GM12878 (cell line): ENCODE measurements at regions of chr2 and their contacts with region 1.

Region 1: DNA sequence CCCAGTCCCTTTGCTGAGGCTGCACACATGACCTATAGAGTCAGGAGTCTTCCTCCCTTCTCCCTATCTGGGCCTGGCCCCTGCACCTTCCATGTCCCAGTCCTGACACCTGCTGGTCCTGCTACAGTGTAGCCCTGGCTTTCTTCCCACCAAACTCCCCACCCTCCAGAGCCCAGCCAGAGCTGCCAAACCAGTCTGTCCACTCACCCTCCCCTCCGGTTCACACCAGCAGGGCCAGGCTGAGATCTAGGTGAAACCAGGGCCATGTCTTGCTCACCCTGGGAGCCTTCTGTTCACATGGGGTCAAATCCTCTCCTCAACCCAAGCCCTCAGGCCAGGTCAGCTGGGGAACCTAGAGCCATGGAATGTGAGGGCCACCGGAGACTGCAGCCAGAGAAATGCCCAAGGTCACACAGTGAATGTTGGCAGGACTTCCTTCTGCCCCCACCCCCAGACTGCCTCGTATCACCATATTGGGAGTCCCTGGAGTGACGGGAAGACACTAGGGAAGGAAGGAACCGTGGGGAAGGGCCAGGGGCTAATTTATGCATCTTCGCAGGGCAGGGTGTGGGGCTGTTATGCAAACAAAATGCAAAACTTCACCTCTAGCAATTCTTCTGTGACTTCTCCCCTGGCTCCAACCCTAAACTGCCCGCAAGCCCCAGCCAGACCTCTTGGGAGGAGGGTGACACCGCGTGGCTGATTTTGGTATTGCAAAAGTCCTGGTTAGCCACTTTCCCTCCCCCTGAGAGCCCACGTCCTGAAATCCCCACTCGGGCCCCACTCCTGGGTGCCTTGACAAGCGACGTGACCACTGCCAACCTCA is 14.6 kb downstream of the TNS1 start:
- DNase-seq: no peak
- ATAC-seq: peak; percentile 94
- H3K4me3 ChIP-seq: no peak overlapping the region
- H3K27ac ChIP-seq: no peak overlapping the region
- H3K4me1 ChIP-seq: no peaks in the 10 kb centered on the region
- H3K27me3 ChIP-seq: no peaks in the 10 kb centered on the region; a peak in 1 of 4 replicates
- CTCF ChIP-seq: peak; percentile 78 to 82 (median 81)
- EP300 ChIP-seq: no peak
- POLR2A ChIP-seq: no peak
- RAD21 ChIP-seq: peak; percentile 83

Region 2: GRCh38 chr2:217934321-217935131 is 53.7 kb before region 1 on chr2:
- CTCF ChIA-PET with region 1: no interaction called
- POLR2A ChIA-PET with region 1: no interaction called
- RAD21 ChIA-PET with region 1: no interaction called
- SMC1A ChIA-PET with region 1: no interaction called
- in situ Hi-C with region 1: no loop called
- intact Hi-C with region 1: no loop called
- DNase-seq: no peak
- ATAC-seq: no peak
- H3K4me3 ChIP-seq: no peak overlapping the region
- H3K27ac ChIP-seq: no peak overlapping the region
- H3K4me1 ChIP-seq: no peaks in the 10 kb centered on the region
- H3K27me3 ChIP-seq: peaks cover 0 to 2% of the 10 kb centered on the region in 2 experiments; a peak in 1 of 4 replicates
- CTCF ChIP-seq: no peak
- EP300 ChIP-seq: no peak
- POLR2A ChIP-seq: no peak
- RAD21 ChIP-seq: no peak

Region 3: DNA sequence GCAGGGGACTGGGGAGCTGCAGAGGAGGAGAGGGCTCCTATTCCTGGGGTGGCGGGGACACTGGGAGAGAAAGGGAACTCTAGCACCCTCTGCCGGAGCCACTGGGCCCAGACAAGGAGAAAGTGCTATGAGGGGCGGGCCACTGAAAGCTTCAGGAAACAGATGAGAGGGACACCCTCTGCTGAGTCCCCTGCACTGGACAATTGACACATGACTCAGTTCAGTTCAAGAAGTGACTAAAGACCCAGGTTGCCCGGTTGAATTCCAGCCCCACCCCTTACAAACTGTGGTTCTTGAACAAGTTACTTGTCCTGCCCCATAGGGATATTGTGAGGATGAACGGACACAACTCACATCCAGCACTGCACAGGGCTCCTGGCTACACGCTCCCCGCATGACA is 85.8 kb after region 1 on chr2:
- CTCF ChIA-PET with region 1: interaction called, 3 read pairs
- POLR2A ChIA-PET with region 1: no interaction called
- RAD21 ChIA-PET with region 1: interaction called, 3 read pairs
- SMC1A ChIA-PET with region 1: no interaction called
- in situ Hi-C with region 1: no loop called
- intact Hi-C with region 1: loop called (anchors 2 kb)
- DNase-seq: no peak
- ATAC-seq: peak; percentile 62
- H3K4me3 ChIP-seq: no peak overlapping the region
- H3K27ac ChIP-seq: no peak overlapping the region
- H3K4me1 ChIP-seq: peaks cover 4% of the 10 kb centered on the region; the same call in 1 of the 2 replicates
- H3K27me3 ChIP-seq: no peaks in the 10 kb centered on the region
- CTCF ChIP-seq: peak; percentile 46 to 68 (median 60)
- EP300 ChIP-seq: no peak
- POLR2A ChIP-seq: no peak
- RAD21 ChIP-seq: peak; percentile 21; the same call in 1 of the 2 replicates